ENCODE measurements at regions of chrX and their contacts with region 1.

Region 1: DNA sequence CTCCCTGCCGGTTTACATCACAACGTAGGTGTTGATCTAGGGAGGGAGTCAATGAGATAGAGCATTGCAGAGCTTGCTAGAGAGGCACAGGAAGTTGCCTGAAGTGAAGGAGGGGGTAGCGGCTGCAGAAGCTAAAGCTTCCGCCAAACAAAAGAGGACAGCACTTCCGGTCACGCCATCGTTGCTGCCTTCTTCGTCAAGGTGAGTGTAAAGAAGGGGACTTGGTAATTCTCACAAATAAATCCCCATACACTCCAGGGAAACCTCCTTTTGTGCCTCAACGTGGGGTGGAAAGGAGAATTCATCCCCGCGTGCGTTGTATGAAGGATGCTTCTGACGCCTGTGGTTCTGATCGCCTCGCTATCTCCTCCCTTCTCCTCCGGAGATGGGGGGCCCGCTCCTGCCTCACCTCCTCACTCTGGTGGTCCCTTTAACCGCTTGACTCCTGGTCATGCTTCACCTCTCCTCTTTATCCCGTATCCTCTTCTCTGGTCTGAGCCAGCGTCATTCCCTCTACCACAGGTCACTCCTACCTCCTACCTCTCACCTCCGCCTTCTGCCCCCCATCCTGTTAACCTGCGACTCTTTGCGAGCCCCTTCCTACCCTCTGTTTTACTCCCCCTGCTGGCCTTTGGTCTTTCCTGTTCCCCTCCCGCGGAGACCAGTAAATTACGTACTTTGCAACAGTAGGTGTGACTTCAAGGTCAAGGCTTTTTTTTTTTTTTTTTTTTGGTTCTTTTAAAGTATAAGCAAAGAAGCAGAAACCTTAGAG is 59.9 kb downstream of the GSPT2 start:
- DNase-seq: peak; percentile 22
- H3K4me3 Mint-ChIP-seq: peak overlapping the region; percentile 92
- H3K27ac Mint-ChIP-seq: peak overlapping the region; percentile 93
- H3K4me1 Mint-ChIP-seq: peaks cover 4% of the 10 kb centered on the region
- H3K27me3 Mint-ChIP-seq: peaks cover 2% of the 10 kb centered on the region

Region 2: GRCh38 chrX:51743179-51743957 is 59.7 kb before region 1 on chrX and contains the start of gene GSPT2:
- intact Hi-C with region 1: loop called (anchors 1 kb)
- DNase-seq: peak; percentile 55
- H3K4me3 Mint-ChIP-seq: peak within 1 kb of the TSS; percentile 88
- H3K27ac Mint-ChIP-seq: peak within 1 kb of the TSS; percentile 67
- H3K4me1 Mint-ChIP-seq: peaks cover 21% of the 10 kb centered on the region
- H3K27me3 Mint-ChIP-seq: peaks cover 10% of the 10 kb centered on the region
- total RNA-seq, gene GSPT2: 12.7 and 13.7 TPM in 2 replicates

Region 3: DNA sequence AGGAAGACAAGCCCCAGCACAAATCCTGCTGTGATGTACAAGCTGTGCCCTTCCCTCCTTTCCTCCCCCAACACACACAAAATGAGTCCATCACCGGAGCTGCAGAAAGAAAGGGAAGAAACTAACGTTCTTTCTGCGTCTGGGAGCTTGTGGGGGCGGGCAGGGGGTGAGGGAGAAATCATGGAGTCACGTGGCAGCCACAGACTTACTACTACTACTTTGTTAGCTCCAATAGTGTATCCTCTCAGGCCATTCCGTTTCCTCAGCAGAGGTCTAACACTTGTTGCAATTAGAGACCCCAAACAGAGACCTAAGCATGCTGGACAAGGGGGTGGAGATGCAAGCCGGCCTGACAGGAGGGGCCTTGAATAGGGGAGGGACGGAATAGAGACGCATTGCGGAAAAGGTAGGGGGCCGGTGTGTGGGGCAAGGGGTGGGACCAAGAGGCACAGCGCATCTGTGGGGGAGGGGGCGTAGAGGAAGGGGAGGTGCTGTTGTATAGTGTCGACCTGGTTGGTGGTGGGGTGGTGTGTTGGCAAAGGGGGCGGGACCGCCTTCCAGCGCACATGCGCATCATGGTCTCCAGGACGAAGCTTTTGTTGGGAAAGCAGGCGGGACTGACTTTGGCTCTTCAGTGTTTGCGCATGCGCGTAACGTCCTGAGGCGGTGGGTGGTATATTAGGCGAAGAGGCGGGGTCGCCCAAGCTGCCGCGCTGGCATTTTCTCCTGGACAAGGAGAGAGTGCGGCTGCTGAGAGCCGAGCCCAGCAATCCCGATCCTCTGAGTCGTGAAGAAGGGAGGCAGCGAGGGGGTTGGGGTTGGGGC is 90.0 kb after region 1 on chrX and contains the start of gene MAGED1:
- intact Hi-C with region 1: loop called (anchors 2 kb)
- DNase-seq: peak; percentile 69
- H3K4me3 Mint-ChIP-seq: peak within 1 kb of the TSS; percentile 89
- H3K27ac Mint-ChIP-seq: peak within 1 kb of the TSS; percentile 83
- H3K4me1 Mint-ChIP-seq: peaks cover 22% of the 10 kb centered on the region
- H3K27me3 Mint-ChIP-seq: no peaks in the 10 kb centered on the region
- total RNA-seq, gene MAGED1: 32.7 and 34.8 TPM in 2 replicates

Region 4: GRCh38 chrX:51931566-51932150 is 128.6 kb after region 1 on chrX:
- intact Hi-C with region 1: no loop called
- DNase-seq: no peak
- H3K4me3 Mint-ChIP-seq: no peak overlapping the region
- H3K27ac Mint-ChIP-seq: no peak overlapping the region
- H3K4me1 Mint-ChIP-seq: no peaks in the 10 kb centered on the region
- H3K27me3 Mint-ChIP-seq: no peaks in the 10 kb centered on the region

Region 5: GRCh38 chrX:51955200-51955599 is 152.1 kb after region 1 on chrX:
- intact Hi-C with region 1: no loop called
- DNase-seq: no peak
- H3K4me3 Mint-ChIP-seq: no peak overlapping the region
- H3K27ac Mint-ChIP-seq: no peak overlapping the region
- H3K4me1 Mint-ChIP-seq: no peaks in the 10 kb centered on the region
- H3K27me3 Mint-ChIP-seq: peaks cover 1% of the 10 kb centered on the region